Naive thymus-derived CD4-positive, alpha-beta T cell (primary cell): ENCODE measurements at regions of chr20 and their contacts with region 1.

Region 1: DNA sequence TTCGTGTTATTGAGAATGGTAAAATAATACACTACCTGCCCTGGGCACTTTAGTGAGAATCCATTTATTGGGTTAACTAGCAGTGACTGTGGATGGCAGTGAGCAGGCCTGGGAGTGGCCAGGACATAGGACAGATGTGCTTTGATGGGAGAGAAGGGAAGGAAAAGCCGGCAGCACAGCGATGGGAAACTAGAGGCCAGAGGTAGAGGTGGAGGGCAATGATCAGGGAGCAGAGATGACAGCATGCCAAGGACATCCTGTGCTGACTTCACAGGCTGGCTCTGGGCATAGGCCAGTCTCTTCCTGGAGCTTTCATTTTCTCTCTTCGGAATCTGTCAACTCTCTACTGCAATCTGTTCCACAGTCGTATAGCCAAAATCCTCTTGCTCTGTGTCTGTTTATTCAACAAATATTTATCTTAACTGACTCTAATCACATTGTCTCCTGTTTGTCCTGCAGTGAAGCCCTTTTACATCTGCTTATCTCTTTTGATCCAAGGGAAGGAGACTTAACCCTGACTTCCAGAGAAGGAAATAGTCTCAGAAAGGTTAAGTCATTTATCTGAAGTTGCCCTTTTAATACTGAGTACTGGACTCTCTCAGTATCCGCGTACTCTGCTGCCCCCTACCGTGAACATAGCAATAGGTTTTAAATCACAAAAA is 18.4 kb upstream of the MMP24 start:
- DNase-seq: peak; percentile 46 to 75 (median 64)
- ATAC-seq: peak; percentile 96
- H3K4me3 ChIP-seq: no peak overlapping the region
- H3K4me3 Mint-ChIP-seq: no peak overlapping the region
- H3K27ac ChIP-seq: no peak overlapping the region
- H3K27ac Mint-ChIP-seq: no peak overlapping the region
- H3K4me1 ChIP-seq: no peaks in the 10 kb centered on the region
- H3K4me1 Mint-ChIP-seq: no peaks in the 10 kb centered on the region
- H3K27me3 ChIP-seq: no peaks in the 10 kb centered on the region
- H3K27me3 Mint-ChIP-seq: no peaks in the 10 kb centered on the region

Region 2: GRCh38 chr20:35269055-35269781 is 61.1 kb after region 1 on chr20:
- CTCF ChIA-PET with region 1: no interaction called
- POLR2A ChIA-PET with region 1: no interaction called
- intact Hi-C with region 1: loop called in 1 of 2 experiments (anchors 2 kb)
- DNase-seq: peak in 3 of 9 donors; percentile 37 to 54 (median 39)
- ATAC-seq: peak; percentile 77
- H3K4me3 ChIP-seq: no peak overlapping the region
- H3K4me3 Mint-ChIP-seq: no peak overlapping the region
- H3K27ac ChIP-seq: no peak overlapping the region
- H3K27ac Mint-ChIP-seq: peak overlapping the region in 2 of 9 donors; percentile 38 to 68
- H3K4me1 ChIP-seq: no peaks in the 10 kb centered on the region
- H3K4me1 Mint-ChIP-seq: peaks cover 0 to 21% (median 15%) of the 10 kb centered on the region in 7 donors
- H3K27me3 ChIP-seq: no peaks in the 10 kb centered on the region
- H3K27me3 Mint-ChIP-seq: no peaks in the 10 kb centered on the region